ENCODE measurements at regions of chr2 and their contacts with region 1.

Region 1: GRCh38 chr2:24315669-24316068 is 44.7 kb downstream of the ITSN2 start:
- DNase-seq: peak; percentile 60
- ATAC-seq: peak; percentile 86
- H3K4me3 ChIP-seq: no peak overlapping the region
- H3K4me3 Mint-ChIP-seq: peak overlapping the region; percentile 54
- H3K27ac ChIP-seq: peak overlapping the region; percentile 45 to 64
- H3K27ac Mint-ChIP-seq: peak overlapping the region; percentile 80
- H3K4me1 ChIP-seq: peaks cover 19 to 28% of the 10 kb centered on the region in 2 donors
- H3K4me1 Mint-ChIP-seq: peaks cover 49% of the 10 kb centered on the region
- H3K27me3 ChIP-seq: no peaks in the 10 kb centered on the region
- H3K27me3 Mint-ChIP-seq: no peaks in the 10 kb centered on the region
- CTCF ChIP-seq: no peak

Region 2: GRCh38 chr2:24228470-24228869 is 87.2 kb before region 1 on chr2:
- CTCF ChIA-PET with region 1: no interaction called
- POLR2A ChIA-PET with region 1: no interaction called
- intact Hi-C with region 1: no loop called
- DNase-seq: no peak
- ATAC-seq: no peak
- H3K4me3 ChIP-seq: no peak overlapping the region
- H3K4me3 Mint-ChIP-seq: no peak overlapping the region
- H3K27ac ChIP-seq: no peak overlapping the region
- H3K27ac Mint-ChIP-seq: no peak overlapping the region
- H3K4me1 ChIP-seq: no peaks in the 10 kb centered on the region
- H3K4me1 Mint-ChIP-seq: no peaks in the 10 kb centered on the region
- H3K27me3 ChIP-seq: no peaks in the 10 kb centered on the region
- H3K27me3 Mint-ChIP-seq: no peaks in the 10 kb centered on the region
- CTCF ChIP-seq: peak; percentile 19

Region 3: GRCh38 chr2:24351981-24352380 is 36.3 kb after region 1 on chr2:
- CTCF ChIA-PET with region 1: no interaction called
- POLR2A ChIA-PET with region 1: no interaction called
- intact Hi-C with region 1: loop called (anchors 5 kb)
- DNase-seq: no peak
- ATAC-seq: no peak
- H3K4me3 ChIP-seq: no peak overlapping the region
- H3K4me3 Mint-ChIP-seq: no peak overlapping the region
- H3K27ac ChIP-seq: peak overlapping the region in 1 of 2 donors; percentile 74
- H3K27ac Mint-ChIP-seq: no peak overlapping the region
- H3K4me1 ChIP-seq: peaks cover 82 to 84% of the 10 kb centered on the region in 2 donors
- H3K4me1 Mint-ChIP-seq: peaks cover 78% of the 10 kb centered on the region
- H3K27me3 ChIP-seq: no peaks in the 10 kb centered on the region
- H3K27me3 Mint-ChIP-seq: no peaks in the 10 kb centered on the region
- CTCF ChIP-seq: no peak

Region 4: DNA sequence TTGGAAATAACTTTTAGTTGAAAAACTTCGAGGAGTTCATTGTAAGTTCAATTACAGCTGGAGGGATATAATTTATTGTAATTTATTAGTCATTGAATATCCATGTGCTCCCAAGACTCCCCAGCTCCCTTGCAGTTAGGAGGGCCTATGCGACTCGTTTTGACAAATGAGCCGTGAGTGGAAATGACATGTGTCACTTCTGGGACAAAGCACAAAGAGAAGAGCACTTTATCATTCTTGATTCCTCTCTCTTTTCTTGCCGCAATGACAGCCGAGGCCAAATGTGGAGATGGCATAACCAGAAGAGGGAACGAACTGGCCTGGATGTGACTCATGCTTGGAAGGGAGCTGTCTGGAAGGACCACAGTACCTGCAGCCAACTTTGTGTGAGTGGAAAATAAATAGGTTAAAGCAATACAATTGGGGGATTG is 88.8 kb after region 1 on chr2:
- CTCF ChIA-PET with region 1: no interaction called
- POLR2A ChIA-PET with region 1: no interaction called
- intact Hi-C with region 1: no loop called
- DNase-seq: no peak
- ATAC-seq: no peak
- H3K4me3 ChIP-seq: no peak overlapping the region
- H3K4me3 Mint-ChIP-seq: no peak overlapping the region
- H3K27ac ChIP-seq: no peak overlapping the region
- H3K27ac Mint-ChIP-seq: no peak overlapping the region
- H3K4me1 ChIP-seq: no peaks in the 10 kb centered on the region
- H3K4me1 Mint-ChIP-seq: no peaks in the 10 kb centered on the region
- H3K27me3 ChIP-seq: peaks cover 0 to 16% (median 9%) of the 10 kb centered on the region in 4 experiments
- H3K27me3 Mint-ChIP-seq: peaks cover 36% of the 10 kb centered on the region
- CTCF ChIP-seq: no peak